ENCODE measurements at regions of chr10 and their contacts with region 1.

Region 1: GRCh38 chr10:102072673-102073527 is 7.8 kb downstream of the HPS6 start:
- DNase-seq: peak; percentile 82
- ATAC-seq: peak; percentile 86 to 88

Region 2: GRCh38 chr10:102114861-102115618 is 42.1 kb after region 1 on chr10:
- intact Hi-C with region 1: loop called in 1 of 2 experiments (anchors 5 kb)
- DNase-seq: peak; percentile 89
- ATAC-seq: peak; percentile 75 to 89

Measured in left cardiac atrium (tissue), 4 donors.